CD4-positive, alpha-beta T cell (primary cell): ENCODE measurements at regions of chr17 and their contacts with region 1.

Region 1: DNA sequence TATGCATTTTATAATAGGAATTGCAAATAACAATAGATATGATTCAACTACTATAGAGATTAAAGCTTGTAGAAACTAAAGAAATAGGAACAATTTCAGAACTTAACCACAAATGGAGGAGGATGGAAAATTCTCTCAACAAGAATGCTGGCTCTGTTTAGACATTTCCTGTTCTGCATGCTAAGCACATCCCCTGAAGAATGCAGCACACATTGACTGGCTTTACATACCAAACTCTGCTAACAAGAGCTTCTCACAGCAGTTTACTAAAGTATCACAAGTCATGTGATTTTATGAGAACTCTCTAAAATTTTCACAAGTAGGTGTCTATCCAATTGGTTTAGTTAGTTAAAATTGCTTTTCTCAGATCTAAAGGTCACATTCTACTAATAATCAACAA is 85.2 kb downstream of the SPAG9 start:
- DNase-seq: no peak
- ATAC-seq: no peak
- H3K4me3 ChIP-seq: no peak overlapping the region
- H3K4me3 Mint-ChIP-seq: no peak overlapping the region
- H3K27ac ChIP-seq: no peak overlapping the region
- H3K27ac Mint-ChIP-seq: peak overlapping the region; percentile 12
- H3K4me1 ChIP-seq: peaks cover 5% of the 10 kb centered on the region
- H3K4me1 Mint-ChIP-seq: peaks cover 30% of the 10 kb centered on the region
- H3K27me3 ChIP-seq: no peaks in the 10 kb centered on the region
- H3K27me3 Mint-ChIP-seq: no peaks in the 10 kb centered on the region
- CTCF ChIP-seq: no peak

Region 2: GRCh38 chr17:50986989-50987660 is 48.3 kb before region 1 on chr17:
- CTCF ChIA-PET with region 1: no interaction called
- POLR2A ChIA-PET with region 1: no interaction called
- intact Hi-C with region 1: loop called in 1 of 2 experiments (anchors 10 kb)
- DNase-seq: no peak
- ATAC-seq: no peak
- H3K4me3 ChIP-seq: no peak overlapping the region
- H3K4me3 Mint-ChIP-seq: no peak overlapping the region
- H3K27ac ChIP-seq: no peak overlapping the region
- H3K27ac Mint-ChIP-seq: no peak overlapping the region
- H3K4me1 ChIP-seq: no peaks in the 10 kb centered on the region
- H3K4me1 Mint-ChIP-seq: no peaks in the 10 kb centered on the region
- H3K27me3 ChIP-seq: no peaks in the 10 kb centered on the region
- H3K27me3 Mint-ChIP-seq: no peaks in the 10 kb centered on the region
- CTCF ChIP-seq: no peak